ENCODE measurements at regions of chr3 and their contacts with region 1.

Region 1: DNA sequence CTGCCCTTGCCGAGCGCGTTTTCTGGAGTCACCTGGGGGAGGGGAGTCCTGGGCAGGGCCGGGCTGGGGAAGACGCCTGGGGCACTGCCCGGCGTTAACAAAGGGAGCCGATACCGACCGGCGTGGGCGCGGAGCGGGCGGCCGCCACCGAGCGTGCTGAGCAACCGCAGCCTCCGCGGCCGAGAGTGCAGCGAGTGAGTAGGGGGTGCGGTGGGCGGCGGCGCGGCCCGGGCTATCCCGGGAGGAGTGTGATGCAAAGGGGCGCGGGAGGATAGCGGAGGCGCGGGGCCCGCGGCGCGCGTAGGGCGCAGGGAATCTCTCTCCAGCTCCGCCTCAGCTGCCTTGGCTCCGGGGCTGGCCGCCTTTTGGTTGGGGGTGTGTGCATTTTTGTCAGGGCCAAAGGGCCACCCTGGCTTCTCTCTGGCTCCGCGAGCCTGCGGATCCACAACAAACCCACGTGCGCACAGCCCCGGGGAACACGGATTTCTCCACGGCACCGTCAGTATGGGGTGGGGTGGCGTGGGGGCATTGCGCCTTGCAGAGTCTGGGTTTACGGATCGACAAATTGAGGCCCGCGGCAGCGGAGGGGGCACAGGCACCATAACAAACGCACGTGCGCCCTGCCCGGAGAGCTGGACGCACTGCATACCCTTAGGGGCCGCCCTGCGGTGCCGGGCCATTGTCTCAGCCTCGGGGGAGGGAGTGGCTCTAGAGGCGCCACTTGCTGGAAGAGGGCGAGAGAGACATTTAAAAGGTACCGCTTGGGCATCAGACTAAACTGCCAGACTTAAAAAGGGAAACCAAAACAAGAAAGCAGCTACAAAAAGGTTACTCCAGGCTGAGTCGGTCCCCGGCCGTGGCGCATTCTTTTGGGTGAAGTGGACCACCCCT is 560 bp downstream of the ST6GAL1 start:
- DNase-seq: peak; percentile 86
- ATAC-seq: peak; percentile 85

Region 2: DNA sequence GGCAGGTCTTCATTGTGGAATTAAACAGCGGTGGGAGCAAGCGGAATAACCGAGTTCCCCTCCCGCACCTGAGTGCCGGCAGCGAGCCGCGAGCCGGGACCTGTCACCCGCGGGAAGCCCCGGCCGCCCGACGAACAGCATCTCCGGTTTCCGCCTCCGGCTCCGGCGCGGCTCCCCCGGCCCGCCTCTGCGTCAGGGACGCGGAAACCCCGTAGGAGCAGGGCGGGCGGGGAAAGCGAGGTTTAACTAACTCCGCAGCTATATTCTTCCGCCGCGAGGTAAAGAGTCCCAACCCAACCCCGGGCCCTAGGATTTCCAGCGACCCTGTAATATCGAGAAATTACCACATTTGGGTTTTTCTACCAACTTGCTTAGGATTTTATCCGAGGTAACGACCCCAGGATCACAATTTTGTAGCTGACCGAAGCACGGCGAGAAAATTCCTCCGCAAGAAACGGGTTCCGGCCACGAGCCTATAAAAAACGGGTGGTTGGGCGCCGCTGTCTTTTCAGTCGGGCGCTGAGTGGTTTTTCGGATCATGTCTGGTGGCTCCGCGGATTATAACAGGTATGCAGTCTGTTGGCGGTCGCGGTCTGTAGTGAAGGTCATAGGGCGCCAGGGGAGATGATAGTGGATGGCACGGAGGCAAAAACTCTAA is 147.7 kb before region 1 on chr3 and contains the start of gene EIF4A2:
- intact Hi-C with region 1: loop called (anchors 5 kb)
- DNase-seq: peak; percentile 94
- ATAC-seq: peak; percentile 87
- total RNA-seq, gene EIF4A2: 422 TPM

Region 3: GRCh38 chr3:186849374-186849975 is 81.4 kb before region 1 on chr3:
- intact Hi-C with region 1: loop called (anchors 2 kb)
- DNase-seq: no peak
- ATAC-seq: peak; percentile 70

Region 4: GRCh38 chr3:186871403-186871924 is 59.4 kb before region 1 on chr3:
- intact Hi-C with region 1: no loop called
- DNase-seq: no peak
- ATAC-seq: no peak

Region 5: GRCh38 chr3:186888569-186888968 is 42.3 kb before region 1 on chr3:
- intact Hi-C with region 1: loop called (anchors 1 kb)
- DNase-seq: no peak
- ATAC-seq: peak; percentile 94

Region 6: GRCh38 chr3:186976837-186977750 is 46.2 kb after region 1 on chr3:
- intact Hi-C with region 1: loop called (anchors 2 kb)
- DNase-seq: peak; percentile 81
- ATAC-seq: peak; percentile 86

Region 7: GRCh38 chr3:187066228-187066995 is 135.5 kb after region 1 on chr3:
- intact Hi-C with region 1: loop called (anchors 5 kb)
- DNase-seq: no peak
- ATAC-seq: peak; percentile 88

Region 8: GRCh38 chr3:188010478-188010877 is 1079.6 kb after region 1 on chr3:
- intact Hi-C with region 1: no loop called
- DNase-seq: no peak
- ATAC-seq: no peak